Keratinocyte (primary cell): ENCODE measurements at regions of chr3 and their contacts with region 1.

Region 1: DNA sequence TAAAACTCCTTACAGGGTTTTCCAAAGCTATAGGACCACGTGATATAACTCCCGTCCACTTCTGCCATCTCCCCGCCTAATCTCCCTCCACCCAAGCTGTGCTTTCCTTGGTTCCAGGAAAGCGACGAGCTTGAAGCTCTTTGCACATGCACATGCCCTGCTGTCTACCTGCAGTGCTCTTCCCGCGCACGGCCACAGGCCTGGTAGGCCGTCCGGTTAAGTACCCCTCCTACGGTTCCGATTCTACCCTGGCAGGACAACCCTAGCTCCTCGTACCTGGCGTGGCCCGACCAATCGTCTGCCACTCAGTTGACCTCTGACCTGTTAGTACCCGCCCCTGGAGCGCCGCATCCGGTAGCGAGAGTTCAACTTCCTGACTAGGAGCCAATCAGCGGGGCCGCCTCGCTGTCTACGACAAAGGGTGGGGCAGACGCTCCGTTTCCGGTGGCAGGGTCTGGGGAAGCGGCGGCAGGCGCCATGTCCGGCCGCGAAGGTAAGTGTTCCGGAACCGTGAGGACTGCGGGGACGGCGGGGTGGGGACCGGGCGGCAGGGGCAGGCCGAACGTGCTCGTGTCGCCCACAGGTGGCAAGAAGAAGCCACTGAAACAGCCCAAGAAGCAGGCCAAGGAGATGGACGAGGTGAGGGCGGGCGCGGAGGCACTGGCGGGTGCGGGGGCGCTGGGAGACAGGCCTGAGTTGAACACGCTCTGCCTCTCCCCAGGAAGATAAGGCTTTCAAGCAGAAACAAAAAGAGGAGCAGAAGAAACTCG is at the starts of genes CCDC51 and TMA7:
- DNase-seq: peak; percentile 94
- H3K4me3 ChIP-seq: peak within 1 kb of the TSS; percentile 65 to 99 (median 98)
- H3K27ac ChIP-seq: peak within 1 kb of the TSS; percentile 88
- H3K4me1 ChIP-seq: peaks cover 22% of the 10 kb centered on the region
- H3K27me3 ChIP-seq: no peaks in the 10 kb centered on the region
- CTCF ChIP-seq: no peak
- polyA plus RNA-seq, gene CCDC51: 27.9 to 28.8 TPM (median 28.4 TPM) in 3 replicates
- polyA plus RNA-seq, gene TMA7: 190 to 418 TPM (median 306 TPM) in 3 replicates

Region 2: DNA sequence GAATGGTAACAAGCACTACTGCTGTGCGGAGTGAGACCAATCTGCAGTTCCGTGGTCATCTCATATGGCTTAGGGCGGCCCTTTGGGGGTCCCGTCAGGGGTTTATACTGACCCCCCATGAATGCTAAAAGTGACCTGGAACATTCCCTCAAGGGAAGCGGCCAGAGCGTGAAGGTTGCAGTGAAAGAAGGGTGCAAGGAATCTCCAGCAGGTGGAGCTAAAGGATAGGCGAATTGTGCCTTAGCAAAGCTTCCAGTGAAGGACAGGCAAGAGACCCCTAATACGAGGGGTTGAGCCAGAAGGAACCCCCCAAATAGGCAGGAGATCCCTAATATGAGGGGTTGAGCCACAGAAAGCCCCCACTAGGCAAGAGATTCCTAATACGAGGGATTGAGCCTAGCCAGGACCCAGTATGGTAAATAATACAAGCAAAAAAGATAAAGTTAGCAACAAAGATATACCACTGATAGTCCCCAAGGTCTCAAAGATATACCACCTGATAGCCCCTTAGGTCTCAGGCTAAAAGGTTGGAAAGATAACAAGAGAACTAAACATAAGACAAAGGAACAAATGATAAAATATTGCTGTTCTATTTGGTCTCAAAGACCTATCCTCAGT is 166.3 kb before region 1 on chr3:
- dilution Hi-C with region 1: loop called (anchors 25 kb)
- DNase-seq: no peak
- H3K4me3 ChIP-seq: no peak overlapping the region
- H3K27ac ChIP-seq: no peak overlapping the region
- H3K4me1 ChIP-seq: peaks cover 22% of the 10 kb centered on the region
- H3K27me3 ChIP-seq: no peaks in the 10 kb centered on the region
- CTCF ChIP-seq: peak; percentile 80 to 90 (median 80)

Region 3: DNA sequence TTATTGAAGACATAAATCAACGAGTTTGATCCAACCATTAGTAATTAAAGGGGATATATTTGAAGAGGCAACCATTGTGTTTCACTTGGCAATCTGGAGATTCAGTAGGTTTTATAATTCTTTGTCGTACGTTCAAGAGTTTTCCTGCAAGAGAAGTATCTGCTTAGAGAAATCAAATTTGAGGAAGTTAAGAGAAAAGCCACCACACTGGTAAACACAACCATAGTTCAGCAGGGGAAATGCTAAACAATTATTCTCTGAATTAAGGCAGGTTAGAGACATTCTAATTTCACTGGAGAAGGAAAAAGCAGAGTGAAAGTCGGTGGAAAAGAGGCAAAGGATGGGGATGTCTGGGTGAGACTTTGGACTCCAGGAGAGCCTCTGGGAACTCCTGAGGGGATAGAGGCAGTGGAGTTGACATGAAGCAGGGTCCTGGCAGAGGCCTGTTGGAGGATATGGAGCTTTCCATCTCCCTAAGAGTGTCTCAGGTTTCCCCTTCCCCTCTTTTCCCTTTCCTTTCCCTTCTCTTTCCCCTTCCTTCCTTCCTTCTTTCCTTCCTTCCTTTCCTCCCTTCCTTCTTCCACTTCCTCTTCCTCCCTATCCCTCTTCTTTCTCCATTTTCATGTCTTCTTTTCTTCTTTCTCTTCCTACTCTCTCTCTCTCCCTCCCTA is 133.0 kb before region 1 on chr3:
- dilution Hi-C with region 1: no loop called
- DNase-seq: no peak
- H3K4me3 ChIP-seq: no peak overlapping the region
- H3K27ac ChIP-seq: no peak overlapping the region
- H3K4me1 ChIP-seq: no peaks in the 10 kb centered on the region
- H3K27me3 ChIP-seq: peaks cover 3% of the 10 kb centered on the region
- CTCF ChIP-seq: no peak